CD14-positive monocyte (primary cell): ENCODE measurements at regions of chr19 and their contacts with region 1.

Region 1: GRCh38 chr19:29873024-29873800 is 61.4 kb downstream of the CCNE1 start:
- DNase-seq: peak; percentile 16 to 43 (median 16)
- H3K4me3 ChIP-seq: peak overlapping the region in 1 of 3 experiments; percentile 67
- H3K4me3 Mint-ChIP-seq: peak overlapping the region; percentile 37 to 84
- H3K27ac ChIP-seq: no peak overlapping the region
- H3K27ac Mint-ChIP-seq: peak overlapping the region in 1 of 7 donors; percentile 61
- H3K4me1 ChIP-seq: peaks cover 9 to 18% of the 10 kb centered on the region in 2 donors
- H3K4me1 Mint-ChIP-seq: peaks cover 17% of the 10 kb centered on the region
- H3K27me3 ChIP-seq: peaks cover 8 to 22% of the 10 kb centered on the region in 2 donors
- H3K27me3 Mint-ChIP-seq: peaks cover 25 to 41% (median 32%) of the 10 kb centered on the region in 3 donors
- CTCF ChIP-seq: peak; percentile 96

Region 2: DNA sequence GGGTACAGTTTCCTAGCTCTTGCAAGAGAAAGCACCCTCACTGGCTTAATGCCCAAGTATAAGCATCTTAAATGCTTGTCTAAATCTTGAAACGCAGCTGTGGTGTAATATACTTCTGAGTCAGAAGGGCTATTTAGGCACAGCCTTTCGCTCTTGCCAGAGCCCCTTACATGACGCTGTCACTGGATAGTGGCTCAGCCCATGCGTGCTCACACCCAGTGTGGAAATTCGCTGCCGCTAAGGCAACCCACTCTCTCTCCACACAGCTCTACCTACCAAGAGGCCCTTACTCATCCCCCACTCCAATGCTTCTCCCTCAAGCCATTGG is 684.2 kb before region 1 on chr19:
- intact Hi-C with region 1: no loop called
- DNase-seq: no peak
- H3K4me3 ChIP-seq: no peak overlapping the region
- H3K4me3 Mint-ChIP-seq: no peak overlapping the region
- H3K27ac ChIP-seq: no peak overlapping the region
- H3K27ac Mint-ChIP-seq: no peak overlapping the region
- H3K4me1 ChIP-seq: no peaks in the 10 kb centered on the region
- H3K4me1 Mint-ChIP-seq: peaks cover 7% of the 10 kb centered on the region
- H3K27me3 ChIP-seq: no peaks in the 10 kb centered on the region
- H3K27me3 Mint-ChIP-seq: peaks cover 2 to 8% (median 4%) of the 10 kb centered on the region in 3 donors
- CTCF ChIP-seq: no peak

Region 3: DNA sequence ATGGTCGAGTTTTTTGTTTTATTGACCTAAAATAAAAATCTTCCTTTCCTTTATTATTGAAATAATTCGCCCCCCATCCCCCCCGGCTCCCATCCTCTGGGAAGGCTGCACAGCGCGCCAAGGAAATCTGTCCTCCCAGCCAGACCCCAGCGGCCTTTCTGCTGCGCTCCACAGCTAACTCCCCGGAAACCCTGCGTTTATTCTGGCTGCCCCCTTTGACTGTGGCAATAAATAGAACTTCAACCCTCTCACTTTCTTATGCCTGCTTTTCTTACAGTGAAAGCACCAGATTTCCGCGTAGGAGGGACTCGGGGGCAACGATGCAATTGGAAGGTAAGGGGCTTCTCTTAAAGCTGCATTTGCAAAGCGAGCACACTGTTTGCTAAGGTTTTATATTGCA is 148.5 kb before region 1 on chr19:
- intact Hi-C with region 1: loop called in 1 of 2 experiments (anchors 5 kb)
- DNase-seq: no peak
- H3K4me3 ChIP-seq: no peak overlapping the region
- H3K4me3 Mint-ChIP-seq: peak overlapping the region in 1 of 2 donors; percentile 61
- H3K27ac ChIP-seq: no peak overlapping the region
- H3K27ac Mint-ChIP-seq: no peak overlapping the region
- H3K4me1 ChIP-seq: peaks cover 4 to 7% of the 10 kb centered on the region in 2 donors
- H3K4me1 Mint-ChIP-seq: peaks cover 7% of the 10 kb centered on the region
- H3K27me3 ChIP-seq: peaks cover 3 to 21% of the 10 kb centered on the region in 2 donors
- H3K27me3 Mint-ChIP-seq: peaks cover 20 to 36% (median 35%) of the 10 kb centered on the region in 3 donors
- CTCF ChIP-seq: no peak

Region 4: DNA sequence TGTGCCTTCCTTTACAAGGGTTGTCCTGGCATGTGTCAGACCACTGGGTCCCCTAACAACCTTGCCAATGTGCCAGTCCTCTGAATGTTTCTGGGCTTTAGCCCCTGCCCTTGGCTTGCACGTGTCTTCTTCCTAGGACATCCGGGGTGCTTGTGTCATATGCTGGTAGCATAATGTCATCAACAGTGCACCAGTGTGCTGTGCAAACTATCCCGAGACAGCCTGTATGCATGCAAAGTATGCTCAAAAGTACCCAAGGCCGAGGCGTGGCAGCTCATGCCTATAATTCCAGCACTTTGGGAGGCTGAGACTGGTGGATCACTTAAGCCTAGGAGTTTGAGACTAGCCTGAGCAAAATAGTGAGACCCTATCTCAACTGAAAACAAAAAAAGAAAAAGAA is 137.4 kb before region 1 on chr19:
- intact Hi-C with region 1: loop called in 1 of 2 experiments (anchors 1 kb)
- DNase-seq: no peak
- H3K4me3 ChIP-seq: no peak overlapping the region
- H3K4me3 Mint-ChIP-seq: no peak overlapping the region
- H3K27ac ChIP-seq: no peak overlapping the region
- H3K27ac Mint-ChIP-seq: no peak overlapping the region
- H3K4me1 ChIP-seq: no peaks in the 10 kb centered on the region
- H3K4me1 Mint-ChIP-seq: no peaks in the 10 kb centered on the region
- H3K27me3 ChIP-seq: no peaks in the 10 kb centered on the region
- H3K27me3 Mint-ChIP-seq: peaks cover 4 to 6% (median 6%) of the 10 kb centered on the region in 3 donors
- CTCF ChIP-seq: no peak

Region 5: GRCh38 chr19:29761575-29762232 is 111.5 kb before region 1 on chr19:
- intact Hi-C with region 1: loop called (anchors 10 kb)
- DNase-seq: no peak
- H3K4me3 ChIP-seq: no peak overlapping the region
- H3K4me3 Mint-ChIP-seq: no peak overlapping the region
- H3K27ac ChIP-seq: no peak overlapping the region
- H3K27ac Mint-ChIP-seq: no peak overlapping the region
- H3K4me1 ChIP-seq: peaks cover 0 to 6% of the 10 kb centered on the region in 2 donors
- H3K4me1 Mint-ChIP-seq: peaks cover 8% of the 10 kb centered on the region
- H3K27me3 ChIP-seq: peaks cover 0 to 3% of the 10 kb centered on the region in 2 donors
- H3K27me3 Mint-ChIP-seq: peaks cover 4 to 9% (median 7%) of the 10 kb centered on the region in 3 donors
- CTCF ChIP-seq: no peak

Region 6: DNA sequence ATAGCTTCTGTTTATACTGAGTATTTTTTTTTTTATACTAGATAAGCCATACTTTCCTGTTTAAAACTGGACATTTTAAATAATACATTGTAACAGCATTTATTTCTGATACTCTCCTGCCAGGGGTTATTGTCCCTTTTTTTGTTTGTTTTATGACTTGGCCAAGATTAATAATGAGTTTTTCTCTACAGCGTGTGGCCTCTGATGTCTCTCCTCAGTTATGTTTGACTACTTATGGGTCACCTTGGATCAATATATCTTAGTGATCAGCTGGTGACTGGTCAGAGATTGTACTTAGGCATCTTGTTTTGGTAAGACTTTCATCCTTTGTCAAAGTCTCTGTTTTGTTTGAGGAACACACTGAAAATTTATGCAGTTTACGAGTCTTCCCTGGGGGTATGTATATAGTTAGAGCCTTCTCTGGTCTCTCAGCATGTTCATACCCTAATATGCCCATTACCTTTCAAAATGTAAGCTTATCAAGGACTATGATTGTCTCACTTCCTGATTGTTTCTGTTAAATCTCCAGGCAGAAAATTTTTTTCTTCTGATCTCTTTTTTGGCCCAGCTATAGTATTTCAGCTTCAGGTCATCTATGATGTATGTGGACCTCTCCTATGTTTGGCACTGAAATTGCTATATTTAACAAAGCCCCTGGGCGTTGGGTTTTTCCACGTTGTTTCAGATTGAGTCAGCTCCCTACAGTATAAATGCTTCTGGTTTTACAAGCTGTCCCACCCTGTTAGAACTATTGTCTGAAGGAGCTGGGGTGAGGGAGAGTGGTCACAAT is 156.7 kb after region 1 on chr19:
- intact Hi-C with region 1: no loop called
- DNase-seq: no peak
- H3K4me3 ChIP-seq: no peak overlapping the region
- H3K4me3 Mint-ChIP-seq: no peak overlapping the region
- H3K27ac ChIP-seq: no peak overlapping the region
- H3K27ac Mint-ChIP-seq: no peak overlapping the region
- H3K4me1 ChIP-seq: no peaks in the 10 kb centered on the region
- H3K4me1 Mint-ChIP-seq: no peaks in the 10 kb centered on the region
- H3K27me3 ChIP-seq: no peaks in the 10 kb centered on the region
- H3K27me3 Mint-ChIP-seq: no peaks in the 10 kb centered on the region
- CTCF ChIP-seq: no peak